Left lung (tissue), 14 donors: ENCODE measurements at regions of chr4 and their contacts with region 1.

Region 1: GRCh38 chr4:26410385-26411293 is 79.6 kb downstream of the CCKAR start:
- DNase-seq: peak in 2 of 4 donors; percentile 62 to 77
- ATAC-seq: peak; percentile 62
- H3K4me3 ChIP-seq: no peak overlapping the region
- H3K27ac ChIP-seq: no peak overlapping the region
- H3K4me1 ChIP-seq: peaks cover 0 to 13% of the 10 kb centered on the region in 2 donors
- H3K27me3 ChIP-seq: no peaks in the 10 kb centered on the region
- CTCF ChIP-seq: peak; percentile 53 to 60

Region 2: GRCh38 chr4:26325191-26325590 is 85.4 kb before region 1 on chr4:
- intact Hi-C with region 1: loop called in 1 of 2 experiments (anchors 5 kb)
- DNase-seq: no peak
- ATAC-seq: no peak
- H3K4me3 ChIP-seq: no peak overlapping the region
- H3K27ac ChIP-seq: no peak overlapping the region
- H3K4me1 ChIP-seq: peaks cover 14 to 69% of the 10 kb centered on the region in 2 donors
- H3K27me3 ChIP-seq: no peaks in the 10 kb centered on the region
- CTCF ChIP-seq: no peak

Region 3: GRCh38 chr4:26509681-26510333 is 99.2 kb after region 1 on chr4:
- intact Hi-C with region 1: no loop called
- DNase-seq: no peak
- ATAC-seq: no peak
- H3K4me3 ChIP-seq: no peak overlapping the region
- H3K27ac ChIP-seq: no peak overlapping the region
- H3K4me1 ChIP-seq: no peaks in the 10 kb centered on the region
- H3K27me3 ChIP-seq: no peaks in the 10 kb centered on the region
- CTCF ChIP-seq: no peak